Activated T-helper 1 cell treated with anti-CD3 and anti-CD28 coated beads, Interleukin-12 subunit alpha, Interleukin-12 subunit beta, Interleukin-2, Interleukin-4 antibody, amounts not matched to agents 30 ng/mL and 10 ng/mL and 1 ng/mL, durations not matched to agents 14 hours and 24 hours and 36 hours (primary cell): ENCODE measurements at regions of chr2 and their contacts with region 1.

Region 1: GRCh38 chr2:68423966-68424650 is 43.0 kb downstream of the FBXO48 start:
- DNase-seq: no peak
- H3K4me3 Mint-ChIP-seq: no peak overlapping the region
- H3K27ac Mint-ChIP-seq: no peak overlapping the region
- H3K4me1 Mint-ChIP-seq: peaks cover 21% of the 10 kb centered on the region
- H3K27me3 Mint-ChIP-seq: peaks cover 4% of the 10 kb centered on the region

Region 2: GRCh38 chr2:68359889-68360288 is 64.2 kb before region 1 on chr2:
- intact Hi-C with region 1: no loop called
- DNase-seq: no peak
- H3K4me3 Mint-ChIP-seq: no peak overlapping the region
- H3K27ac Mint-ChIP-seq: no peak overlapping the region
- H3K4me1 Mint-ChIP-seq: peaks cover 21% of the 10 kb centered on the region
- H3K27me3 Mint-ChIP-seq: peaks cover 12% of the 10 kb centered on the region

Region 3: GRCh38 chr2:68371581-68371980 is 52.5 kb before region 1 on chr2:
- intact Hi-C with region 1: loop called (anchors 2 kb)
- DNase-seq: no peak
- H3K4me3 Mint-ChIP-seq: peak overlapping the region; percentile 21
- H3K27ac Mint-ChIP-seq: peak overlapping the region; percentile 3
- H3K4me1 Mint-ChIP-seq: peaks cover 17% of the 10 kb centered on the region
- H3K27me3 Mint-ChIP-seq: peaks cover 14% of the 10 kb centered on the region

Region 4: DNA sequence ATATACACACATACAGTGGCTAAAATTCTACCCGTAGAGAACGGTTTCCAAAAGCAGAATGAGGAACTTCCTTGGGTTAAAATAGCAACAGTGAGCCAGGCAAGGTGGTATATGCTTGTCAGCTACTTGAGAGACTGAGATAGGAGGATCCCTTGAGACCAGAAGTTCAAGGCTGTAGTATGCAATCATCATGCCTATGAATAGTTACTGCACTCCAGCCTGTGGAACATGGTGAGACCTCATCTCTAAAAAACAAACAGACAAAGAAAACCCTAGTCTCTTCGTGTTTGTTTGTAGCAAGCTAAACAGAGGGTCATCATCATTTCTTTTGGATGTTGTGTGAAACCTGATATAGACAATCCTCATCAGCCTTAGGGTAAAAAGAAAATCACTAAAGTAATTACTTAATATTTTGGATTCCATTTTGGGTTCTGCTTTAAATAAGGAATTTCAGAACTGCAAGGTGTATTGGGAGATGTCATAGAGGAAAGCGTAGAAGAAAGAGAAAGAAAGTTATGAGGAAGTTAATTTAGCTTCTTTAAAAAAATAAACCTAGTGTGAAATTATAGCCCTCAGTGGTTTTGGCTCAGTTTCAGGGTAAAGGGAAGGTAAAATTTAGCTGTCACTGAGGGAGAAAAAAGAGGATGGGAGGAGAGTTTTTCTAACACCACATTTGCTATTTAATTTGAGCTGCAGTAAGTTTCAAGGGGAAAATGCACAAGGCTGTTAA is 12.5 kb before region 1 on chr2:
- intact Hi-C with region 1: loop called (anchors 2 kb)
- DNase-seq: no peak
- H3K4me3 Mint-ChIP-seq: no peak overlapping the region
- H3K27ac Mint-ChIP-seq: no peak overlapping the region
- H3K4me1 Mint-ChIP-seq: peaks cover 10% of the 10 kb centered on the region
- H3K27me3 Mint-ChIP-seq: peaks cover 15% of the 10 kb centered on the region

Region 5: GRCh38 chr2:68946117-68946516 is 522.0 kb after region 1 on chr2:
- intact Hi-C with region 1: no loop called
- DNase-seq: no peak
- H3K4me3 Mint-ChIP-seq: no peak overlapping the region
- H3K27ac Mint-ChIP-seq: no peak overlapping the region
- H3K4me1 Mint-ChIP-seq: peaks cover 5% of the 10 kb centered on the region
- H3K27me3 Mint-ChIP-seq: peaks cover 37% of the 10 kb centered on the region